ENCODE measurements at regions of chr3 and their contacts with region 1.

Region 1: DNA sequence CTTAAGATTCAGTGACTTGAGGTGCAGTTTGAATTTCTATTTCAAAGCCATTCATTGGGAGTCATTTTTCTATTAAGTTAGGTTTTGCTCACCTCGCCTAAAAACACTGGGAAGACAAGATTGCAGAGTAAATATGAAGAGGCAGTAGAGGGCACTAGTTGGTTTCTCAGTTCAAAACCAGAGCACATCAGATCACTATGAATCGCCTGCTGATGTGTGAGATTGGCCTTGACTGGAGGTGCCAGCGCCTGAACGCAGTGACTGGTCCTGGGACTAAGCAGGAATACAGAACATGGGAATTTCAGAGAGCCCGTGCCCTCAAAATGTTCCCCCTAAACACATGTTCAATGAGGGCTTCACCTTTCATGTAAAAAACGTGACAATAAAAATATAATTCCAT is 229.0 kb downstream of the ITPR1 start:
- DNase-seq: peak; percentile 36
- ATAC-seq: peak; percentile 80
- H3K4me3 Mint-ChIP-seq: no peak overlapping the region
- H3K27ac Mint-ChIP-seq: peak overlapping the region; percentile 64
- H3K4me1 Mint-ChIP-seq: peaks cover 30% of the 10 kb centered on the region
- H3K27me3 Mint-ChIP-seq: no peaks in the 10 kb centered on the region
- CTCF ChIP-seq: peak; percentile 34

Region 2: GRCh38 chr3:4615750-4616149 is 106.4 kb before region 1 on chr3:
- CTCF ChIA-PET with region 1: no interaction called
- POLR2A ChIA-PET with region 1: no interaction called
- intact Hi-C with region 1: no loop called
- DNase-seq: no peak
- ATAC-seq: no peak
- H3K4me3 Mint-ChIP-seq: no peak overlapping the region
- H3K27ac Mint-ChIP-seq: no peak overlapping the region
- H3K4me1 Mint-ChIP-seq: no peaks in the 10 kb centered on the region
- H3K27me3 Mint-ChIP-seq: no peaks in the 10 kb centered on the region
- CTCF ChIP-seq: no peak

Region 3: DNA sequence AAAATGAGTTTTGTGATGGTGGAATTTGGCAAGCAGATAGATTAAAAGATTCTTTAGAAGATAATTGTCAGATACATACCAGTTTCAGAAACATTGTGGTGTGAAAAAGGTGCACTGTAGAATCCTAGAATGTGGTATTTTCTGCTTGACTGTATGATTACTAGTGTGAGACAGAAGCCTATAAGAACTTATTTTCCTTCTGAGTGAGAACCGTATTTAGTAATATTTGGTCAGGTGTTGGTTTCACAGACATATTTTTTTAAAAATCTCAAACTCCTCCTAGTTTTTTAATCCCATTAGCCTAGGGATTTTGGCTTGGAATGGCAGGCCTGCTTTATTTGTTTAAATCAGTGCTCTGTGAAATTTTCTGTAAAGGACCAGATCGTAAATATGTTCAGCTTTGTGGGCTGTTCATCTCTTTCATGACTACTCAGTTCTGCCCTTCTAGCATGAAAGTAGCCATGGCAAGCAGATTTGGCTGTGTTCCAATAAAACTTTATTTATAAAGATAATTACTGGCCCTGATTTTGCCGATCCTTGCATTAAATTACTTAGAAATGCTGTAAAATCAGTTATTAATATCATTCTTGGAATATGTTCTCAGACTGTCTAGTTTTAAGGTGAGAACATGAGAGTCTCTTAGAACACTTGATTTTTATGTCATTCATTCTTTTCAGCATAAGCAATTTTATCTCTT is 23.8 kb before region 1 on chr3:
- CTCF ChIA-PET with region 1: no interaction called
- POLR2A ChIA-PET with region 1: no interaction called
- intact Hi-C with region 1: no loop called
- DNase-seq: no peak
- ATAC-seq: no peak
- H3K4me3 Mint-ChIP-seq: no peak overlapping the region
- H3K27ac Mint-ChIP-seq: no peak overlapping the region
- H3K4me1 Mint-ChIP-seq: peaks cover 6% of the 10 kb centered on the region
- H3K27me3 Mint-ChIP-seq: no peaks in the 10 kb centered on the region
- CTCF ChIP-seq: no peak

Region 4: DNA sequence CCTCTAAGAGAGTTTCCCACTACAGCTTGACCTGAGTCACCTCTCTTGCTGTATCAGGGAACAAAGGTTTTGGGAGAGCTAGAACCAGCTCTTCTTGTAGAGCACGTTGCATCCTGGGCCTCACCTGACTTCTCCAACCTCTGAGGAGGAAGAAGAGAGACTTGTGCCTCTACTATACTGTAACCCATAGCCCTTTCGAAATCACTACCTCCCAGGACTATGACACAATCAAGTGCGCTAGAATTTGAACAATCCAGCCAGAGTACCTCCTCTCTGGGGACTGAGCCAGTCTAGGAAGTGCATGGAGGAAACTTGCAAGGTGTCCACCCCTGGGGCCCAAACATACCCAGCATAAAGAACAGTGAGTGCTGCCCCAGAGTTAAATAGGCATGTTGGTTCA is 64.3 kb after region 1 on chr3:
- CTCF ChIA-PET with region 1: no interaction called
- POLR2A ChIA-PET with region 1: no interaction called
- intact Hi-C with region 1: no loop called
- DNase-seq: no peak
- ATAC-seq: no peak
- H3K4me3 Mint-ChIP-seq: no peak overlapping the region
- H3K27ac Mint-ChIP-seq: no peak overlapping the region
- H3K4me1 Mint-ChIP-seq: no peaks in the 10 kb centered on the region
- H3K27me3 Mint-ChIP-seq: no peaks in the 10 kb centered on the region
- CTCF ChIP-seq: no peak

Region 5: GRCh38 chr3:4906107-4906621 is 184.1 kb after region 1 on chr3:
- CTCF ChIA-PET with region 1: interaction called, 3 read pairs
- POLR2A ChIA-PET with region 1: no interaction called
- intact Hi-C with region 1: loop called (anchors 5 kb)
- DNase-seq: peak; percentile 35
- ATAC-seq: peak; percentile 73
- H3K4me3 Mint-ChIP-seq: no peak overlapping the region
- H3K27ac Mint-ChIP-seq: no peak overlapping the region
- H3K4me1 Mint-ChIP-seq: peaks cover 68% of the 10 kb centered on the region
- H3K27me3 Mint-ChIP-seq: no peaks in the 10 kb centered on the region
- CTCF ChIP-seq: no peak

Region 6: GRCh38 chr3:5057857-5058324 is 335.8 kb after region 1 on chr3:
- CTCF ChIA-PET with region 1: interaction called, 10 read pairs
- POLR2A ChIA-PET with region 1: interaction called, 4 read pairs
- intact Hi-C with region 1: no loop called
- DNase-seq: peak; percentile 93
- ATAC-seq: peak; percentile 95
- H3K4me3 Mint-ChIP-seq: no peak overlapping the region
- H3K27ac Mint-ChIP-seq: no peak overlapping the region
- H3K4me1 Mint-ChIP-seq: peaks cover 32% of the 10 kb centered on the region
- H3K27me3 Mint-ChIP-seq: peaks cover 11% of the 10 kb centered on the region
- CTCF ChIP-seq: peak; percentile 86

Measured in activated CD8-positive, alpha-beta T cell treated with anti-CD3 and anti-CD28 coated beads for 36 hours (primary cell).